Left colon (tissue), 2 donors: ENCODE measurements at regions of chr5 and their contacts with region 1.

Region 1: GRCh38 chr5:140239939-140240700 is 62.8 kb downstream of the PFDN1 start:
- DNase-seq: peak; percentile 68 to 77
- ATAC-seq: peak; percentile 40

Region 2: DNA sequence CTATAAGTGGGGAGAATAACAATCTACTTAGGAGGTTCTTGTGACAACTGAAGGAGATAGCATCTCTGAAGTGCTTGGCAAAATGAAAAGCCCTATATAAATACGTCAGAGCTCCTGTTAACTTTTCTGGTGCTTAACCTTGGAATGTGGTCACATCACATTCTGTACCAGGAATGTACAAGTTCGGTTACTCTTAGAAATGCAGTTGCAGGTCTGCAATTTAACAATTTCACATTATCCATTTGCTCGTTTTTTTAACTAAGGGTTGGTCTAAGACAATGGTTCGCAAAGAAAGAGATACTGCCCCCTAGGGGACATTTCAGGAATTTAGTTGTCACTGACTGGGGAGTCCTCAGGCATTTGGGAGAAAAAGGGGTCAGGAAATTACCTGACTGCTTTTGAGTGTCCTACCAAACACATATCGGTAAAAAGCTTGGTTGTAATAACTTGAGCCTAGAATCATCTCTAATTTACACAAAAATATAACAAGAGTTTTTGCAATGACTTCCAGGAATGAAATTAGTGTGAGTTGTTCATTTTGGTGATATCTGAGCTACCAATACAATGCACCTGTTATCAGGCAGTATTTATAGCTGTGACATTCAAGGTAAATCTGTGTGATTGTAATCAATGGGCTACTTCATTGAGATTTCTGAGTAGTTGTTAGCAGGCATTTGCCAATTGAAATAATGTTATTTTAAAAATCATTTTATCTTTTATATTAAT is 111.7 kb after region 1 on chr5:
- intact Hi-C with region 1: loop called (anchors 2 to 5 kb)
- DNase-seq: no peak
- ATAC-seq: no peak

Region 3: GRCh38 chr5:140357726-140358093 is 117.6 kb after region 1 on chr5:
- intact Hi-C with region 1: loop called (anchors 2 to 5 kb)
- DNase-seq: peak; percentile 77 to 84
- ATAC-seq: peak; percentile 87